Right ventricle myocardium inferior (tissue), 1 donor: ENCODE measurements at regions of chr18 and their contacts with region 1.

Region 1: GRCh38 chr18:46555724-46556123 is 101.3 kb downstream of the LOXHD1 start:
- DNase-seq: no peak
- ATAC-seq: no peak

Region 2: DNA sequence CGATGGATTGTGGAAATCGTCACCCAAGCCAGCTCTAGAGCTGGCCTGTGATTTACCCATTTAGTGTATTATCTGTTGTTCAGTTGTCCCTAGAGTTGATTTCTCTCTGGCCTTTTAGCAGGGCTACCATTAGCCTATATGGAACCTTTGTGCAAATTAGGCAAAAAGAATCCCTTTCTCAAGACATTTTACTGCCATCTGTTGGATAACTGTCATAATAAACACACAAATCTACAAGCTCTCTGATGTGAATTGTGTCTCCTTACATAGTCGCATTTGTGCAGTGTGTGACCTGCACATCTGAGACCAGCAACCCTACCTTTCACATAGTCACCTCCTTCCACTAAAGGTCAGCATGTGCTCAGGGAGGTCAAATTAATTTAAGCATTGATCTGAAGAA is 67.3 kb after region 1 on chr18:
- intact Hi-C with region 1: loop called (anchors 5 kb)
- DNase-seq: no peak
- ATAC-seq: no peak